ENCODE measurements at regions of chr3 and their contacts with region 1.

Region 1: GRCh38 chr3:184335661-184336546 is 1.5 kb upstream of the FAM131A start:
- DNase-seq: peak; percentile 90 to 97
- ATAC-seq: peak; percentile 85
- H3K4me3 ChIP-seq: peak overlapping the region; percentile 19 to 73
- H3K27ac ChIP-seq: peak overlapping the region; percentile 85 to 93
- H3K4me1 ChIP-seq: no peaks in the 10 kb centered on the region
- H3K27me3 ChIP-seq: no peaks in the 10 kb centered on the region

Region 2: GRCh38 chr3:183844606-183845005 is 491.3 kb before region 1 on chr3:
- intact Hi-C with region 1: no loop called
- DNase-seq: no peak
- ATAC-seq: no peak
- H3K4me3 ChIP-seq: no peak overlapping the region
- H3K27ac ChIP-seq: no peak overlapping the region
- H3K4me1 ChIP-seq: no peaks in the 10 kb centered on the region
- H3K27me3 ChIP-seq: no peaks in the 10 kb centered on the region

Region 3: DNA sequence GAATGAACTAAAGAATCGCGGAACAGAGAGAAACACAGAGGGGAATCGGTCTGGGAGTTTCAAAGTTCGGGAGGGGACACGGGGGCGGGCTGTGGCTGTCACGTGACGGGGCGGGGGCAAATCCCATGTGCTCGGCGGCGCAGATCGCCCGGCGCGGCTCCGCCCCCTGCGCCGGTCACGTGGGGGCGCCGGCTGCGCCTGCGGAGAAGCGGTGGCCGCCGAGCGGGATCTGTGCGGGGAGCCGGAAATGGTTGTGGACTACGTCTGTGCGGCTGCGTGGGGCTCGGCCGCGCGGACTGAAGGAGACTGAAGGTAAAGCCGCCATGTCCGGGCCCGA is 21.6 kb before region 1 on chr3 and contains the start of gene EIF4G1:
- intact Hi-C with region 1: loop called in 1 of 2 experiments (anchors 1 kb)
- DNase-seq: peak; percentile 96 to 98
- ATAC-seq: peak; percentile 94
- H3K4me3 ChIP-seq: peak within 1 kb of the TSS; percentile 87 to 95
- H3K27ac ChIP-seq: peak within 1 kb of the TSS; percentile 51 to 96
- H3K4me1 ChIP-seq: peaks cover 0 to 6% of the 10 kb centered on the region in 2 donors
- H3K27me3 ChIP-seq: no peaks in the 10 kb centered on the region
- total RNA-seq, gene EIF4G1: 234 to 285 TPM

Region 4: GRCh38 chr3:184320099-184320445 is 15.8 kb before region 1 on chr3:
- intact Hi-C with region 1: loop called (anchors 2 kb)
- DNase-seq: peak; percentile 98
- ATAC-seq: peak; percentile 92
- H3K4me3 ChIP-seq: no peak overlapping the region
- H3K27ac ChIP-seq: no peak overlapping the region
- H3K4me1 ChIP-seq: peaks cover 0 to 6% of the 10 kb centered on the region in 2 donors
- H3K27me3 ChIP-seq: no peaks in the 10 kb centered on the region

Region 5: GRCh38 chr3:184362668-184363540 is 27.0 kb after region 1 on chr3:
- intact Hi-C with region 1: loop called in 1 of 2 experiments (anchors 2 kb)
- DNase-seq: peak; percentile 97 to 98
- ATAC-seq: peak; percentile 93
- H3K4me3 ChIP-seq: peak overlapping the region; percentile 78 to 85
- H3K27ac ChIP-seq: peak overlapping the region; percentile 91 to 96
- H3K4me1 ChIP-seq: no peaks in the 10 kb centered on the region
- H3K27me3 ChIP-seq: no peaks in the 10 kb centered on the region